Psoas muscle (tissue), 8 donors: ENCODE measurements at regions of chr1 and their contacts with region 1.

Region 1: DNA sequence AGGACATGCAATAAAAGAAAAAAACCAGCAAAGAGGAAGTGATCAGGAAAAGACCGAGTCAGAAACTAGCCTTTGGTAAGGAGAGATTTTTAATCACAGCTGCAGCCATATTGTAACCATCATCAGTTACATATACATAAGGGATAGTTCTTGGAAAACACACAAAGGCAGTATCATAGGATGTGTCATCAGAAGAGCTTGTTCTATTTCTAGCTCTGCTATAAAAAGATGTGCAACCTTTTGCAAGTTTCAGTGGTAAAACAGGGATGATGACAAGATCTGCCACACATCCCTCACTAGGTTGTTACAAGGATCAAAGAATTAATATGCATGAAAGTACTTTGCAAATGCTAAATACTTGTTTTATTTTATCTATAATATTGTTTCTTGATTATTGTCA is 342.0 kb downstream of the VAV3 start:
- DNase-seq: no peak
- ATAC-seq: no peak
- H3K4me3 ChIP-seq: no peak overlapping the region
- H3K27ac ChIP-seq: no peak overlapping the region
- H3K4me1 ChIP-seq: no peaks in the 10 kb centered on the region
- H3K27me3 ChIP-seq: no peaks in the 10 kb centered on the region
- CTCF ChIP-seq: no peak

Region 2: GRCh38 chr1:107076841-107077240 is 546.1 kb before region 1 on chr1:
- intact Hi-C with region 1: no loop called
- DNase-seq: no peak
- ATAC-seq: no peak
- H3K4me3 ChIP-seq: no peak overlapping the region
- H3K27ac ChIP-seq: no peak overlapping the region
- H3K4me1 ChIP-seq: no peaks in the 10 kb centered on the region
- H3K27me3 ChIP-seq: no peaks in the 10 kb centered on the region
- CTCF ChIP-seq: no peak

Region 3: DNA sequence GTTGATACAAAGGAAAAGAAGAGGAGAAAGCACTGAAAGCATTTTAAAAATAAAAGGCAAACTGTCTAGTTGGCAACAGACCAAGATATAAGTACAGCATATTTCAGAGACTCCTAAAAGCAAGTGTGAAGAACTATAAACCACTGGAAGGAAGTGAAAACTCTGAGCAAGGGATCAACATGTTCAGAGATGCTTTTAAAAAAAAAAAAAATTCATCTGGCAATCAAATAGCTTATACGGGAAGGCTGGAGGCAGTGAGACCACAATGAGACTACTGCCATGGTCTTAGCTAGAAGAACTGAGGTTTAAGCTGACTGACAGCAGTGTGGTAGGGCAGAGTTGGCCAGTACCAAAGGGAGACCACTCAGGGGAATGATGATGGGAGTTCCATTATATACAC is 217.8 kb after region 1 on chr1:
- intact Hi-C with region 1: loop called in 1 of 2 experiments (anchors 5 kb)
- DNase-seq: no peak
- ATAC-seq: no peak
- H3K4me3 ChIP-seq: no peak overlapping the region
- H3K27ac ChIP-seq: no peak overlapping the region
- H3K4me1 ChIP-seq: no peaks in the 10 kb centered on the region
- H3K27me3 ChIP-seq: no peaks in the 10 kb centered on the region
- CTCF ChIP-seq: no peak